ENCODE measurements at regions of chr6 and their contacts with region 1.

Region 1: DNA sequence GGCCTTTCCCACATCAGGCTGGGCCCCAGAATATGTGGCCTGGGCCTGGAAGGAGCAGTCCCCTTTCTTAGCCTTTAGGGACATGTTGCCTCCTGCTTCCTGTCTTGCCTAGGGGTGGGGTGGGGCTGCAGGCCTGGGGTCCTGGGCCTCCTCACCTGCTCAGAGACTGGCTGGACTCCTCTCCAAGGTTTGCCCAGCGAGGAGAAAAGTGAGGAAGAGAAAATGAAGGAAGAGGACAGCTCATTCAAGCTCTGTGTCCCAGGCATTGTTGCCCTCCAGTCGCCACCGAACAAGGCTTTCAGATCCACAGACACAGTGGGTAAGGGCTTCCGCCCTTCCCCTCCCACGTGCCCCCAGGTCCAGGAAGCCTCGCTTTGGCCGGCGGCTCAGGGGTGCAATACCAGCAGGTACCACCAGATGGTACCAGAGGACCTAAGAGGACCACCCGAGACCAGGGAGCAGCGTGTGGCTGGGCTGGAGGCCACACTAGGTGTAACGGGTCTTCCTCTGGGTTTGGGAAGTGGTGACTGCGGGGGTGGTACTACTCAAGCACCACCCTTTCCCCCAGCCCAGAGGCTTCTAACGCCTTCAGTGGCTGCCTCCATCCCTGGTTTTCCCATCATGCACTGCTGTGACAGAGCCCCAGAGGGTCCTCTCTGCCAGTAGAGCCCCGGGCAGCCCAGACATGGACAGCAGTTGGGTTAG is 5.5 kb upstream of the BAK1 start:
- DNase-seq: peak; percentile 84 to 89
- ATAC-seq: peak; percentile 48 to 62 (median 56)
- H3K4me3 ChIP-seq: peak overlapping the region; percentile 39
- H3K27ac ChIP-seq: no peak overlapping the region
- H3K4me1 ChIP-seq: peaks cover 20% of the 10 kb centered on the region
- H3K27me3 ChIP-seq: no peaks in the 10 kb centered on the region
- CTCF ChIP-seq: peak; percentile 98

Region 2: DNA sequence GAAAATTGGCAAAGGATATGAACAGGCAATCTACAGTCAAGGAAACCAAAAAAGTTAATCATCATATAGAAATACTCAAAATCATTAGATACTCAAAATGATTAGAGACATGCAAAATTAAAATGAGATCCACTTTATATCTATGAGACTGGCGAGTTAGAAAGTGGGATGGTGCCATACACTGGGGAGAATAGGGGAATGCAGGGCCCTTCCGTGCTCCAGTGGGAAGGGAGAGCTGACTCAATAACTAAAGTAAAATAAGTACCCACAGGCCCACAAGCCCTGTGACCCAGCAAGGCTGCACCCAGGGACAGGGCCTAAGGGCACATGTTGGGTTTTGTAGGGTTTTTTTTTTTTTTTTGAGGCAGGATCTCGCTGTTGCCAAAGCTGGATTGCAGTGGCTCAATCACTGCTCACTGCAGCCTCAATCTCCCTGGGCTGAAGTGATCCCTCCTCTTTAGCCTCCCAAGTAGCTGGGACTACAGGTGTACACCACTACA is 50.4 kb before region 1 on chr6:
- intact Hi-C with region 1: no loop called
- DNase-seq: no peak
- ATAC-seq: no peak
- H3K4me3 ChIP-seq: no peak overlapping the region
- H3K27ac ChIP-seq: no peak overlapping the region
- H3K4me1 ChIP-seq: no peaks in the 10 kb centered on the region
- H3K27me3 ChIP-seq: no peaks in the 10 kb centered on the region
- CTCF ChIP-seq: no peak

Region 3: DNA sequence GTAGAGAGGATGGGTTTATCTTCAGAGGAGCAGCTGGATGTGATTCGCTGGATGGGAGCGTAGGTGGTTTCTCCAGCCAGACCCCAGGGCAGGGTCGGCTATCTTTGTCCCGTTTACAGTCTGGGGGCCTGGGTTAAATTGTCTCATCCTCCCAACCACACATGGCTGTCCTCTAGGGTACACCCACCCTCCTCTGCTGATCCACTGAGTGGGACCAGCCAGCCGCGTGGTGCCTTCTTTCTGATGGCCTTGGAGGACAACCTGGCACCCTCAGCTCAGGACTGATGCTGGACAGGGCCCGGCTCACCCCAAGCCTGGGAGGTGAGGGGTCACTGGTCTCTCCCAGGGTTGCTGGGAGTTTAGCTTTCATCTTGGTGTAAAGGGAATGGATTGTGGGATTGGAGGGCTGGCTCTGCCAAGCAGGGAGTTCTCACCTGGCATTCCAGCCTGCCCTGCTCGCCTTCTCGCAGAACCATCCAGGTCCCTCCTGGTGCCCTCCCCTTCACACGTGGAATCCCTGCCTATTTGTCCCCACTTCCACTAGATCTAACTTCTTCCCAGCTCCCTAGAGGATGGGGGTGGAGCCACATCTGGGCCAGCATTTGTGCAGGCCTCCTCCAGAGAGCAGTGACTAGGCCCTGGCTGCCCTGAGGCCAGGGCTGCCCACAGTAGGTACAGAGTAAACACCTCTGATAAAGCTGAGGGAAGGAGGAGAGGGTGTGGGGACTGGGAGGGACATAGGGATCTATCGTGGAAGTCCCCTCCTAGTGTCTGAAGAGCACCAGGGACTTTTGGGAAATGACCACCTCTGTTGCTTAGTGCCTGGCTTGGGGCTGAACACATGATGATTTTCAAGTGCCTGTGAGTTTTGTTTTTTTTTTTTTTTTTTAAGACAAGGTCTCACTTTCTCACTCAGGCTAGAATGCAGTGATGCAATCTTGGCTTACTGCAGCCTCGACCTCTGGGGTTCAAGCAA is 37.2 kb after region 1 on chr6:
- intact Hi-C with region 1: no loop called
- DNase-seq: peak in 1 of 2 donors; percentile 53
- ATAC-seq: no peak
- H3K4me3 ChIP-seq: peak overlapping the region; percentile 71
- H3K27ac ChIP-seq: no peak overlapping the region
- H3K4me1 ChIP-seq: peaks cover 3% of the 10 kb centered on the region
- H3K27me3 ChIP-seq: peaks cover 0 to 19% (median 5%) of the 10 kb centered on the region in 3 donors
- CTCF ChIP-seq: no peak

Region 4: GRCh38 chr6:33633462-33634158 is 48.1 kb after region 1 on chr6:
- intact Hi-C with region 1: loop called in 1 of 2 experiments (anchors 5 kb)
- DNase-seq: peak; percentile 80 to 87
- ATAC-seq: peak; percentile 81 to 89 (median 82)
- H3K4me3 ChIP-seq: peak overlapping the region; percentile 66
- H3K27ac ChIP-seq: peak overlapping the region; percentile 46
- H3K4me1 ChIP-seq: peaks cover 10% of the 10 kb centered on the region
- H3K27me3 ChIP-seq: no peaks in the 10 kb centered on the region
- CTCF ChIP-seq: no peak

Region 5: DNA sequence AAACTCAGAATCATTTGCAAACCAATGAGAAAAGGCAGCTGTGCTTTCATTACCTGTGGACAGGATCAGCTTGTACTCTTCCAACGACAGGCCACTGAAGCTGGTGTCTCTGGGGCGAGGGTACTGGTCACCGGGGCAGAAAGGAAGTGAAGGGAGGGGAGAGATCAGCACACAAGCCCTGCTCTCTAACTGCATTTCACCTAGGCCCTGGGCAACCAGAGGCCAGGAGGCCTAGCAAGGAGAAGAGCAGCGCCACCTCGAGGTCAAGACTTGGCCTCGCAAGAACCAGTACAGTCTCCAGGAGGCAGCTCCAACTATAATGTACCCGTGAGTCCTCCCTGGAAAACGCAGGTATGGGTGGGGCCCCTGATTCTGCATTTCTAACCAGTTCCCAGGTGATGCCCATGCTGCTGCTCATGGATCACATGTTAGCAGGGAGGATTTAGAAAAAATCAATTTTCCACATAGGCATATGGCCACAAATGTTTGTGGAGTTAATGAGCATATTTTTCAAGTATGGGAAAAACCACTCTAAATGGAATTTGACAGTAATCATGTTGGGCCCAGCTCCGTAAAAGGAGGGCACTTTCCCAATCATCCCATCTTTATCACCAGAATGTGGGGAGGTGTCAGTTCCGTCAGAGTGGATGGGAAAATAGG is 115.0 kb after region 1 on chr6:
- intact Hi-C with region 1: loop called (anchors 2 to 5 kb)
- DNase-seq: peak; percentile 65 to 83
- ATAC-seq: peak; percentile 79 to 83 (median 80)
- H3K4me3 ChIP-seq: peak overlapping the region; percentile 5
- H3K27ac ChIP-seq: no peak overlapping the region
- H3K4me1 ChIP-seq: peaks cover 36% of the 10 kb centered on the region
- H3K27me3 ChIP-seq: no peaks in the 10 kb centered on the region
- CTCF ChIP-seq: peak; percentile 67

Region 6: GRCh38 chr6:33761922-33762629 is 176.5 kb after region 1 on chr6:
- intact Hi-C with region 1: loop called in 1 of 2 experiments (anchors 5 kb)
- DNase-seq: peak; percentile 80 to 97
- ATAC-seq: peak; percentile 95 to 97 (median 95)
- H3K4me3 ChIP-seq: peak overlapping the region; percentile 41
- H3K27ac ChIP-seq: peak overlapping the region; percentile 75
- H3K4me1 ChIP-seq: peaks cover 21% of the 10 kb centered on the region
- H3K27me3 ChIP-seq: no peaks in the 10 kb centered on the region
- CTCF ChIP-seq: peak; percentile 75

Region 7: DNA sequence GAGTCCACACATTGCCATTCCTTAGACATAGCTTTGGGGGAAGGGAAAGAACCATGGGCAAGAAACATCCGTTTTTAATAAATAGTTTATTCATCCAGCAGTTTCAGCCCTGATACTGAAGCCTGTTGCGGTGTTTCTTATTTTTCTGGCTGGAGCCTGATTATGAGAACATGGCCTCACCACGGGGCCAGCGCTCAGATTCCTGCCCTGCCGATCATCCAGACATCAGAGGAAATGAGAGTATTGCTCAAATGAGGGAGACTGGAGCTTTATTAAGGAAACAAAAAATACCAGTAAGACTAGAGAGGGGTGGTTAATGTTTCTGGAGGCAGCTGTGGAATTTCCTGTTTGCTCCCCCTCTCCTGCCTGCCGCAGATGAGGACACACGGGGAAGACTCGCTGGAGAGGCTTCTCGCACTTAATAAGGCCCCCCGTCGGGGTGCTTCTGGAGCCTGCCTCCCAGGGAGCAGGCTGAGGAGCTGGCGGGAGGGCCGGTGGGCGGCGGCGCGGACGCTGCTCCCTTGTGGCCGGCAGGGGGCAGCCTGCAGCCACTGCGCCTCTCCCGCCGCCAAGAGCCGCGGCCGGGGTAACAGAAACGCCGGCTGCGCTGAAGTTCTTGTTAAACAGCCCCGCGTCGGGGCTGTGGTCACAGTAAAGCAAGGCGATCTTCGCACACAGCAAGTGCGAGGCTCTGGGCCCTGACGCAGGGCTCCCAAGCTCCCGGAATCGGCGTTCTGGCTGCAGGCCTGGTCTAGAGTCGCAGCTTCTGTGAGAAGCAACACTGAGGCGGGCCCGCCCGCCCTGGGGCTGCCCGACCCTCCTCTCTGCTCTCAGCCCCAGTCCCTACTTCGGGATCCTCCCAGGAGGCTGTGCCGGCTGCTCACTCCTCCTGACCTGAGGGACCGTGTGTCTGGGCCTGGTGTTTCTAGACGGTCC is 185.9 kb after region 1 on chr6:
- intact Hi-C with region 1: loop called in 1 of 2 experiments (anchors 5 kb)
- DNase-seq: peak; percentile 77 to 87
- ATAC-seq: peak; percentile 80 to 86 (median 84)
- H3K4me3 ChIP-seq: peak overlapping the region; percentile 12
- H3K27ac ChIP-seq: peak overlapping the region; percentile 63
- H3K4me1 ChIP-seq: peaks cover 23% of the 10 kb centered on the region
- H3K27me3 ChIP-seq: no peaks in the 10 kb centered on the region
- CTCF ChIP-seq: peak; percentile 92

Region 8: DNA sequence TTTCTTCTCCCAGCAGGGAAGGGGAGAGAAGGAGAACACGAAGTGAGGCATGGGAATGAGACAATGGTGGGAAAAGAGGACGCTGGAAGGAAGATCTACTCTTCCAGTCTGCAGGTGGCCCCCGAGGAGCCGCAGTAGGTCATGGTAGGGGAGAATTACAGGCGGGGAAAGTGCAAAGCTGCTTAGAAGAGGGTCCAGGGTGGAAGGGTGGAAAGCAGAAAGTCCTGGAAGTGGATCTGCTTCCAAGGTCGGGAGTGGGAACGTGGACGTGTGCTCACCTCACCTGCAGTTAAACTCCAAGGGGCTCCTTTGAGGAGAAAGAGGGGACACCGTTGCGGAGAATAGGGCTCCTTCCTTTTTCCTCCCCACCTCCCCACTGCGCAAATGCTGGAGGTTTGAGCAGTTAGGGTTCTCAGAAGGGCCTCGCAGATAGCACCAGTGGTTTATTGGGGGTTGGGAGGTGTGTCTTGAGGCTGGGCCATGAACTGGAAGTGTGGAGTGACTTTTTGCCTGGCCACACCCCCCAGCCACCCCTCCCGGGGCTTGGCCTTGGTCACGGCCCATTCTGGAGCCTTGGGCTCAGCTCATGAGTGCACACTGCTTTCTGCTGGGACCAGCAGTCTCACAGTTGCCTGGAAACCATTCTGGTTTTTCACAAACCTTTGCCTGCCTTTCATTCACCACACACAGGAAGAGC is 318.6 kb after region 1 on chr6:
- intact Hi-C with region 1: no loop called
- DNase-seq: no peak
- ATAC-seq: peak in 1 of 4 donors; percentile 14
- H3K4me3 ChIP-seq: no peak overlapping the region
- H3K27ac ChIP-seq: no peak overlapping the region
- H3K4me1 ChIP-seq: no peaks in the 10 kb centered on the region
- H3K27me3 ChIP-seq: peaks cover 0 to 10% (median 0%) of the 10 kb centered on the region in 3 donors
- CTCF ChIP-seq: no peak